T-cell (primary cell): ENCODE measurements at regions of chr22 and their contacts with region 1.

Region 1: DNA sequence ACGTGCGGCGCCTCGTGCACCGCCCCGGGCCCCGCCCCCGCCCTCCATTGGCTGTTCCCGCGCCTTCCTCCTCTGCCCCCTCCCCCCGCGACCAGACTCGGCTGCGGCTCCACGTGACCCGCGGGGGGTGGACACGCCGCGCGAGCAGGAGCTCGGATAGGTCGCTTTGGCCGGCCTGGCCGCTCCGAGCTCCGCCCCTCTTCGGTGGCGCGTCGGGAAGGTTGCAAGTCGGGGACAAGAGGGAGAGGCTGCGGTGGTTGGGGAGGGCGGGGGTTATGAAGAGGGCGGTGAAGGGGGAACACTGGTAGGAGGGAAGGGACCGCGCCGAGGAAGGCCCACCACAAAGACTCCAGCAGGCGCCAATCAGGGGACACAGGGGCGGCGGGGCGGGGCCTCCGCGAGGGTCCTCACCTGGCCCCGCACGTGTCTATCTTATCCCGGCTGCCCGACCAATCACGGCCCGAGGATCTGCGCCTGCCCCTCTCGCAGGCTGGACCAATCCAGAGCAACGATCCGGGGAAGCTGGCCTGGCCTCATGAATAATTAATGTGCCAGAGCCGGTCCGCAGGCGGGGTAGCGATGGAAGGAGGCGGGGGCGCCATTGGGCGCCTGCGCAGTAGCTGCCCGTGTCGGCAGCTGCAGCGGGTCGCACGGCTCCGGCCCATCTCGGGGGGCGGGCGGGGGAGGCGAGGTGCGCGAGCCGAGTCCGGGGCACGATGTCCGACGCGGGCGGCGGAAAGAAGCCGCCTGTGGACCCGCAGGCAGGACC is at the start of gene TEF:
- DNase-seq: peak; percentile 95 to 100 (median 98)
- ATAC-seq: peak; percentile 83 to 86 (median 86)
- H3K4me3 ChIP-seq: peak within 1 kb of the TSS; percentile 66 to 80
- H3K4me3 Mint-ChIP-seq: peak within 1 kb of the TSS; percentile 87 to 92 (median 88)
- H3K27ac ChIP-seq: peak within 1 kb of the TSS; percentile 99
- H3K27ac Mint-ChIP-seq: peak within 1 kb of the TSS; percentile 96 to 97
- H3K4me1 ChIP-seq: peaks cover 4 to 22% of the 10 kb centered on the region in 2 experiments
- H3K4me1 Mint-ChIP-seq: peaks cover 9 to 23% (median 20%) of the 10 kb centered on the region in 3 donors
- H3K27me3 ChIP-seq: no peaks in the 10 kb centered on the region
- H3K27me3 Mint-ChIP-seq: no peaks in the 10 kb centered on the region
- total RNA-seq, gene TEF: 4.1 to 10.8 (median 4.6) TPM

Region 2: DNA sequence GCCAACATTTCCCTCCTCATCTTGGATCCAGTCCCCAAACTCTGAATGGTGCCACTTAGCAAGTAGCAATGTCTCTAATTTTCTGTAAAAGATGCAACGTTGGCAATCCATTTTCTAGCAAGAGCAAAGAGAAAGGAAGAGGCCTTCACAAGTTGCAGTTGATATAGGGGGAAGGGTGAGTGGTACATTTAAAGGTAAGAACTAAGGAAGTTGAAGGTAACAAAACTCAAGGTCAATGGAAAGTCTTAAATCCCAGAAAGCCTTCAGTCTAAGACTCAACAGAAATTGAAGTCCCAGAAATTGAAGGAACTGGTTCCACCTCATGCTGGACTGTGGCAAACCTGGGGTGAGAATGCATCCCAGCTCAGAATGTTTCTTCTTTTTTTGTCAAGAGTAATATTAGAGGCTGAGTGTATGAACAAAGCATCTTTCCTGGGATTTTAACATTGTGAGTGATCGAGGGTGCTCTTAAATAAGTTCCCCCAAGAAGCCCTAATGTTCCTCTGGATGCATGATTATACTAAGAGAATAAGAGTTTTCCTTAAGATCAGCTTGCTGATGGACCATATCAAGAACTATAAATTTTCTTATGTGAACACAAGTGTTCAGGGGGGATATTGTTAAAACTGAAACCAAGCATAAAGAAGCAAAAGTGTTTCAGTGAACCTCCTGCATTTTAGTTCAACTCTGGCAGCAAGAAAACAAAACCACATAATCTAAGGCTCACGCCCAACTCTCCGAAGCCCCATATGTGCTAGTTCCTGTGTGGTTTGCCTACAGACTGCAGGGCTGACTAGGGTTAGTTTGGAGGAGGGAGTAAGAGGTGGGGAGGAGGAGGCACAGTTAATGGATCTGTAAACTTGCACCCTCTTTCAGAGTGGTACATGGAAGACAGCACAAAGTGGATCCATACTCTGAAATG is 1480.9 kb before region 1 on chr22 and contains the start of gene GRAP2:
- CTCF ChIA-PET with region 1: no interaction called
- POLR2A ChIA-PET with region 1: interaction called in 1 of 2 experiments, 13 read pairs
- DNase-seq: peak in 34 of 35 experiments; percentile 54 to 88 (median 71)
- ATAC-seq: peak; percentile 93 to 96 (median 94)
- H3K4me3 ChIP-seq: peak within 1 kb of the TSS; percentile 72 to 91
- H3K4me3 Mint-ChIP-seq: peak within 1 kb of the TSS; percentile 84 to 98 (median 97)
- H3K27ac ChIP-seq: peak within 1 kb of the TSS; percentile 87
- H3K27ac Mint-ChIP-seq: peak within 1 kb of the TSS; percentile 99 to 100
- H3K4me1 ChIP-seq: peaks cover 26 to 28% of the 10 kb centered on the region in 2 experiments
- H3K4me1 Mint-ChIP-seq: peaks cover 20 to 33% (median 28%) of the 10 kb centered on the region in 3 donors
- H3K27me3 ChIP-seq: no peaks in the 10 kb centered on the region
- H3K27me3 Mint-ChIP-seq: no peaks in the 10 kb centered on the region
- total RNA-seq, gene GRAP2: 138 to 199 (median 157) TPM

Region 3: GRCh38 chr22:40965936-40966725 is 415.4 kb before region 1 on chr22:
- CTCF ChIA-PET with region 1: interaction called in 1 of 2 experiments, 11 read pairs
- POLR2A ChIA-PET with region 1: no interaction called
- DNase-seq: no peak
- ATAC-seq: no peak
- H3K4me3 ChIP-seq: no peak overlapping the region
- H3K4me3 Mint-ChIP-seq: no peak overlapping the region
- H3K27ac ChIP-seq: no peak overlapping the region
- H3K27ac Mint-ChIP-seq: no peak overlapping the region
- H3K4me1 ChIP-seq: no peaks in the 10 kb centered on the region
- H3K4me1 Mint-ChIP-seq: peaks cover 0 to 16% (median 5%) of the 10 kb centered on the region in 3 donors
- H3K27me3 ChIP-seq: no peaks in the 10 kb centered on the region
- H3K27me3 Mint-ChIP-seq: no peaks in the 10 kb centered on the region

Region 4: DNA sequence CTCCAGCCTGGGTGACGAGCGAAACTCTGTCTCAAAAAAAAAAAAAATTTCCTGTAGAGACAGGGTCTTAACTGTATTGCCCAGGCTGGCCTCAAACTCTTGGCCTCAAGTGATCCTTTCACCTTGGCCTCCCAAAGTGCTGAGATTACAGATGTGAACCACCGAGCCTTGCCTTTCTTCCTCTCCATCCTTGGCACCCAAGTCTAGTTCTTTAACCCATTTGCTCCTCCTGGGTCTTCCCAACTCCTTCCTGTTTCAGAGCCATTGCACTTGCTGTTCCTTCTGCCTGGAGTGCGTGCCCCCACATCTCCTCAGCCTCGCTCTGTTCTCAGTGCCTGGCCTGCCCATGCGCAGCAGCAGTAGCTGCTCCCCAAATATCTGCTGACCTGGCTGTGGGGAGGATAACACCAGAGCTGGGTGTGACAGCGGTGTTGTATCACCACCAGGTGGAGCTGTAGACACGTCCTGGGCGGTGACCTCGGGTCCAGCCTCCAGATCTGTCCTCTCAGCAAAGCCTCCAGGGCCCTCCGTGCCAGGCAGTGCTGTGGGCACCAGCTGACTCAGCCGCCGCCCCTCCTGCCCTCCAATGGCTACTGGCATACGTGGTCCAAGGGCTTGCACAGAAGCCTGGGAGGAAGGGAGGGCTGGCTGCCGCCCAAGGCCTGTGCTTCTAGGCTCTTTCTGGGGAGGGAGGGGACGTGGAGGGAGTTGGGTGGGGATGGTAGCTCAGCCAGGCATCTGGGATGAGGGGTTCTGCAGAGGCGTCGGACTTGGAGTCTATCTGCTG is 22.2 kb after region 1 on chr22:
- CTCF ChIA-PET with region 1: interaction called in 1 of 2 experiments, 4 read pairs
- POLR2A ChIA-PET with region 1: interaction called in 1 of 2 experiments, 16 read pairs
- DNase-seq: peak; percentile 55 to 91 (median 74)
- ATAC-seq: peak; percentile 96 to 99 (median 98)
- H3K4me3 ChIP-seq: no peak overlapping the region
- H3K4me3 Mint-ChIP-seq: no peak overlapping the region
- H3K27ac ChIP-seq: no peak overlapping the region
- H3K27ac Mint-ChIP-seq: no peak overlapping the region
- H3K4me1 ChIP-seq: peaks cover 2 to 16% of the 10 kb centered on the region in 2 experiments
- H3K4me1 Mint-ChIP-seq: peaks cover 8 to 9% (median 9%) of the 10 kb centered on the region in 3 donors
- H3K27me3 ChIP-seq: no peaks in the 10 kb centered on the region
- H3K27me3 Mint-ChIP-seq: no peaks in the 10 kb centered on the region

Region 5: GRCh38 chr22:41557401-41558240 is 176.1 kb after region 1 on chr22:
- CTCF ChIA-PET with region 1: no interaction called
- POLR2A ChIA-PET with region 1: no interaction called
- DNase-seq: no peak
- ATAC-seq: no peak
- H3K4me3 ChIP-seq: no peak overlapping the region
- H3K4me3 Mint-ChIP-seq: no peak overlapping the region
- H3K27ac ChIP-seq: no peak overlapping the region
- H3K27ac Mint-ChIP-seq: no peak overlapping the region
- H3K4me1 ChIP-seq: peaks cover 0 to 3% of the 10 kb centered on the region in 2 experiments
- H3K4me1 Mint-ChIP-seq: peaks cover 0 to 3% (median 0%) of the 10 kb centered on the region in 3 donors
- H3K27me3 ChIP-seq: peaks cover 6 to 73% of the 10 kb centered on the region in 2 experiments
- H3K27me3 Mint-ChIP-seq: peaks cover 14 to 63% of the 10 kb centered on the region in 2 donors

Region 6: GRCh38 chr22:41589391-41590241 is 208.1 kb after region 1 on chr22 and contains the start of gene PMM1:
- CTCF ChIA-PET with region 1: interaction called in 1 of 2 experiments, 15 read pairs
- POLR2A ChIA-PET with region 1: interaction called in 1 of 2 experiments, 3 read pairs
- DNase-seq: peak; percentile 99 to 100 (median 100)
- ATAC-seq: peak; percentile 96 to 98 (median 97)
- H3K4me3 ChIP-seq: peak within 1 kb of the TSS; percentile 77 to 80
- H3K4me3 Mint-ChIP-seq: peak within 1 kb of the TSS; percentile 85 to 94 (median 89)
- H3K27ac ChIP-seq: peak within 1 kb of the TSS; percentile 44
- H3K27ac Mint-ChIP-seq: peak within 1 kb of the TSS; percentile 88 to 90
- H3K4me1 ChIP-seq: peaks cover 5 to 24% of the 10 kb centered on the region in 2 experiments
- H3K4me1 Mint-ChIP-seq: peaks cover 0 to 25% (median 21%) of the 10 kb centered on the region in 3 donors
- H3K27me3 ChIP-seq: no peaks in the 10 kb centered on the region
- H3K27me3 Mint-ChIP-seq: no peaks in the 10 kb centered on the region
- total RNA-seq, gene PMM1: 22.6 to 39.7 (median 33.4) TPM

Region 7: GRCh38 chr22:41648432-41648831 is 266.9 kb after region 1 on chr22:
- CTCF ChIA-PET with region 1: no interaction called
- POLR2A ChIA-PET with region 1: no interaction called
- DNase-seq: no peak
- ATAC-seq: peak in 2 of 4 experiments; percentile 36 to 52
- H3K4me3 ChIP-seq: no peak overlapping the region
- H3K4me3 Mint-ChIP-seq: no peak overlapping the region
- H3K27ac ChIP-seq: no peak overlapping the region
- H3K27ac Mint-ChIP-seq: peak overlapping the region; percentile 19 to 48
- H3K4me1 ChIP-seq: no peaks in the 10 kb centered on the region
- H3K4me1 Mint-ChIP-seq: peaks cover 0 to 7% (median 6%) of the 10 kb centered on the region in 3 donors
- H3K27me3 ChIP-seq: no peaks in the 10 kb centered on the region
- H3K27me3 Mint-ChIP-seq: no peaks in the 10 kb centered on the region